Right ventricle myocardium inferior (tissue), 1 donor: ENCODE measurements at regions of chr18 and their contacts with region 1.

Region 1: DNA sequence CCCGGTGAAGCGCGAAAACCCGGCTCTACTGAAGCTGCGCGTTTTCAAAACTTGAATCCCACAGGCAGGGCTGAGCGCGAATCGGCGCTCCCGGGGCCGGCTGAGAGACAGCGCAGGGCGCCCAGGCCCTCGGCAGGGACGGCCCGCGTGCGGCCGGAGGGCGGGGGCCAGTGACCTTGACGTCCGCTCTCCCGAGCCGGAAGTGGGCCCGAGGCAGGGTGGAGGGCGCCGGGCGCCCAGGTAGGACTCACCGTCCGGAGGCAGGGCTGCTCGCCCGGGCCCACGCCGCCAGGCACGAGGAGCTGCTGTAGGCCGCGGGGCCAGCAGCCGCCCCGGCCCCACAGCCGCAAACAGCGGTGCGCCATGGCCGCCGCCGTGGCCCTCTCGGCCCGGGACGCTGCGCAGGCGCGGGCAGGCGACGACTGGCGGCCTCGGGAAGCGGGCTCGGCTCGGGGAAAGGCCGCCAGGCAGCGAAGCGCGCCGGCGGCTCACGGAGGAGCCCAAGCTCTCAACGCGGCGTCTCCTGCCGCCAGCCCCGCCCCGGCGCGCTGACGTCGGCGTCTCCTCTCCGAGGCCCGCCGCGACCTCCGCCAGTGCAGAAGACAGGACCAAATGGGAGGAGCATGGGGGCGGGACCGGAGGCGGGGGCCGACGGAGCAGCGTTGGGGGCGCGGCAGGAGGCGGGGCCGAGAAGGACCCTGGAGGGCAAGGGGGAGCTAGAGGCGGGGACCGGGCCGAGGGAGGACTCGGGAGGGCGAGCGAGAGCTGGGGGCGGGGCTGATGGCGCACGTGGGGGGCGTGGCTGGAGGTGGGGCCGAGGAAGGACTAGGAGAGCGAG is at the start of gene AFG3L2:
- DNase-seq: peak; percentile 100
- ATAC-seq: peak; percentile 95
- total RNA-seq, gene AFG3L2: 140 TPM

Region 2: DNA sequence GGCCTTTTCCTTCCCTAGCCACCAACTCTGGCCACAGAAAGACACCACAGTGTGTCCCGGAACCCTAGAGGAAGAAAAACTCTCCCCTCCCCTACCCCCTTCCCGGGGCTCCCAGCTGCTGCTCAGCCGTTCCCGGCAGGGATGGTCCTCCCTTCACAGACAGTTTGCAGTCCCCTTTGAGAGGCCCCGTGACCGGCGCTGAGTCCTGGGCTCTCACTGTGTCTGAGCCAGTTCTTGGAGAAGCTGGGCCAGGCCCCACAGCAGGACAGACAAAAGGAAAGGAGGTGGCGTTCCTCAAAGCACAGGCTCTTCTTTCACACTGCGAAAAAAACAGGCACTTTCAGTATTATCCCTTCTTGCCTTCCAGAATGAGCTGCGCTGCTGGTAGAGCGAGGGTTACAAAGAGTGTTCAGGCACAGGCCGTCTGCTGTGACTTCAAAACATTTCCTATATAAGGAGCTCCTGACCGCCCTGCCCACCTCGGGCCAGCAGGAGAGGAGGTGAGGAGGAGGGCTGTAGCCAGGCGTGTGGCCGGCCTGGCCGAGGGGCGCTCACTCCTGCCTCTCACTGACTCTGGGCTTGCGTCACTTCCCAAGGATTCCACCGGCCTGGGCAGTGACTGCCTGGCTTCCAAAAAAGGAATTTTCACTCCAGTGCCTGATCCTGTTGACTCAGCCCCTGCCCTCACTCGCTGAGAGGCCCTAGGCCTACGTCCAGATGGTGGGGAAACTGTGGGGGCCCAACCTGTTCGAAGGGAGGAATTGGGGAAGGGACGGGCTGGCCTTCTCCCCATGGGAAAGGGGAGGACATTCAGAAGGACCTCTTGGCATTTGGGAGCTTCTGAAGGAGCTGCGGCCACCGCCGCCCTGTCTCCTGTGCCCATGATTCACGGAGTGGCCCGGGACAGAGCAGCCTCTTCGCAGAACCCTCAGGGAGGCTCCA is 97.9 kb before region 1 on chr18:
- intact Hi-C with region 1: loop called (anchors 2 kb)
- DNase-seq: peak; percentile 90
- ATAC-seq: peak; percentile 95

Region 3: GRCh38 chr18:12336875-12337274 is 40.1 kb before region 1 on chr18:
- intact Hi-C with region 1: loop called (anchors 5 kb)
- DNase-seq: no peak
- ATAC-seq: no peak

Region 4: DNA sequence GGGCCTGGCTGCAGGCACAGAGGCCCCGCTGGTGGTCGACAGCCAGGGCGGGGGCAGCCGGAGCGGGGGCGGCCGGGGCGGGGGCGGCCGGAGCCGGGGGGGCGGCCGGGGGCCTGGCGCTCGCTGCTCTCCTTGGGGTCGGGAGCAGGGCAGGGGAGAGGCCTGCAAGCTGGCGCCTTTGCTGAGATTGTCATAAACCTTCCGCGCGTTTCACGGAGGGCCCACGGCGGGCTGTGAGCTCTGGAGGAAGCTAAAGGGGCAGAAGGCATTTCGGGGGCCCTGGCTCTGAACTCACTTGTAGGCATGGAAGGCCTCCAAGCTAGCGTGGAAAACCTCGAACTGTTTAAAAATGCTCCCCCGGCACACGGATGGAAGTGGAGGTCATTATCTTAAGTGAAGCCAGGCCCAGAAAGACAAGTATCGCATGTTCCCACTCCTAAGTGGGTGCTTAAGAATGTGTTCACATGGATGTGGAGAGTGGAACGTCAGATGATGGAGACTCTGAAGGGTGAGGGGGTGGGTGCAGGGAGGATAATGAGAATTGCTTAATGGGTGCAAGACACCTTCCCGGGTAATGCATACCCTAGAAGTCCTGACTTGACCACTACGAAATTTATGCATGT is 31.4 kb after region 1 on chr18:
- intact Hi-C with region 1: loop called (anchors 1 kb)
- DNase-seq: no peak
- ATAC-seq: peak; percentile 24